Activated CD4-positive, alpha-beta memory T cell treated with anti-CD3 and anti-CD28 coated beads, Interleukin-2, amount 10 ng/mL, durations not matched to agents 7 days and 5 days (primary cell): ENCODE measurements at regions of chr10 and their contacts with region 1.

Region 1: GRCh38 chr10:4849555-4850242 is 23.7 kb downstream of the AKR1E2 start:
- DNase-seq: peak; percentile 90
- H3K4me3 Mint-ChIP-seq: peak overlapping the region; percentile 5
- H3K27ac Mint-ChIP-seq: no peak overlapping the region
- H3K4me1 Mint-ChIP-seq: peaks cover 11% of the 10 kb centered on the region
- H3K27me3 Mint-ChIP-seq: no peaks in the 10 kb centered on the region

Region 2: GRCh38 chr10:4691776-4692175 is 157.9 kb before region 1 on chr10:
- CTCF ChIA-PET with region 1: no interaction called
- POLR2A ChIA-PET with region 1: no interaction called
- DNase-seq: no peak
- H3K4me3 Mint-ChIP-seq: no peak overlapping the region
- H3K27ac Mint-ChIP-seq: no peak overlapping the region
- H3K4me1 Mint-ChIP-seq: no peaks in the 10 kb centered on the region
- H3K27me3 Mint-ChIP-seq: peaks cover 6% of the 10 kb centered on the region

Region 3: GRCh38 chr10:4802706-4803487 is 46.8 kb before region 1 on chr10:
- CTCF ChIA-PET with region 1: no interaction called
- POLR2A ChIA-PET with region 1: no interaction called
- DNase-seq: no peak
- H3K4me3 Mint-ChIP-seq: no peak overlapping the region
- H3K27ac Mint-ChIP-seq: no peak overlapping the region
- H3K4me1 Mint-ChIP-seq: no peaks in the 10 kb centered on the region
- H3K27me3 Mint-ChIP-seq: peaks cover 12% of the 10 kb centered on the region

Region 4: DNA sequence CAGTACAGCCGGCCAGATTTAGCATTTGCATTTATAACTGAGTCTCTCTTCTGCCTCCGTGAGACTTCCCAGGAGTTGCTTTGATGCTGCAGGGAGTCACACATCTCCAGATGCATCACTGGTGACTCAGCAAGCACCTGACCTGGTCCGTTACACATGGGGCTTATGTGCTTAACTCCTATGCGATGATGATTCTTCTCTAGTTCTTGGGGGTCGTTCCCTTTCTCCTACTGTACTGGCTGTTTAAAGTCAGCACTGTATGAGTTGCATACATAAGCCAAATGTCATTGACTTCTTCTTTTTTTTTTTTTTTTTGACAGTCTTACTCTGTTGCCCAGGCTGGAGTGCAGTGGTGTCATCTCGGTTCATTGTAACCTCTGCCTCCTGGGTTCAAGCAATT is 36.7 kb before region 1 on chr10:
- CTCF ChIA-PET with region 1: interaction called, 53 read pairs
- POLR2A ChIA-PET with region 1: no interaction called
- DNase-seq: no peak
- H3K4me3 Mint-ChIP-seq: no peak overlapping the region
- H3K27ac Mint-ChIP-seq: no peak overlapping the region
- H3K4me1 Mint-ChIP-seq: peaks cover 5% of the 10 kb centered on the region
- H3K27me3 Mint-ChIP-seq: peaks cover 14% of the 10 kb centered on the region

Region 5: GRCh38 chr10:4839401-4839800 is 10.3 kb before region 1 on chr10:
- CTCF ChIA-PET with region 1: interaction called, 38 read pairs
- POLR2A ChIA-PET with region 1: interaction called, 3 read pairs
- DNase-seq: no peak
- H3K4me3 Mint-ChIP-seq: no peak overlapping the region
- H3K27ac Mint-ChIP-seq: no peak overlapping the region
- H3K4me1 Mint-ChIP-seq: peaks cover 25% of the 10 kb centered on the region
- H3K27me3 Mint-ChIP-seq: no peaks in the 10 kb centered on the region

Region 6: DNA sequence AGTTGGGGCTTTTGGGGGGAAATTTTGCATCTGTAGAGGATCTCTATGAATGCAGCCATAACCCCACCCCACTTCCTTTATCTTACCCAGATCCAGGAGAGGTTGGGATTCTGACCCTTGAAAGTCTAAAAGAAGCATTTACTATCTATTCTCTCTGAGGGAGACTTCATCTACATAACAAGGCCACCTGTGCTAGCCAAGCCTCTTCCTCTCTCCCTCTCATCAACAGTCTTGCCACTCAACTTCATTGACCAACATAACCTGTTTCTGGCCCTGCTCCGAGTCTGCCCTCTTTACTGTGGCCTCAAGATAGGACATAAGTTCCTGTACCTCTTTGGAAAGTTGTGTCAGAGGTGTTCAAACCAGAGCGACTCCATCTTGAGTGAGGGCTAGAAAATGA is 535.5 kb after region 1 on chr10:
- CTCF ChIA-PET with region 1: interaction called, 21 read pairs
- POLR2A ChIA-PET with region 1: no interaction called
- DNase-seq: no peak
- H3K4me3 Mint-ChIP-seq: no peak overlapping the region
- H3K27ac Mint-ChIP-seq: no peak overlapping the region
- H3K4me1 Mint-ChIP-seq: no peaks in the 10 kb centered on the region
- H3K27me3 Mint-ChIP-seq: peaks cover 4% of the 10 kb centered on the region

Region 7: GRCh38 chr10:5446390-5446926 is 596.8 kb after region 1 on chr10:
- CTCF ChIA-PET with region 1: interaction called, 10 read pairs
- POLR2A ChIA-PET with region 1: no interaction called
- DNase-seq: peak; percentile 80
- H3K4me3 Mint-ChIP-seq: peak overlapping the region; percentile 73
- H3K27ac Mint-ChIP-seq: peak overlapping the region; percentile 69
- H3K4me1 Mint-ChIP-seq: peaks cover 62% of the 10 kb centered on the region
- H3K27me3 Mint-ChIP-seq: no peaks in the 10 kb centered on the region